Mucosa of descending colon (tissue), 3 donors: ENCODE measurements at regions of chr1 and their contacts with region 1.

Region 1: DNA sequence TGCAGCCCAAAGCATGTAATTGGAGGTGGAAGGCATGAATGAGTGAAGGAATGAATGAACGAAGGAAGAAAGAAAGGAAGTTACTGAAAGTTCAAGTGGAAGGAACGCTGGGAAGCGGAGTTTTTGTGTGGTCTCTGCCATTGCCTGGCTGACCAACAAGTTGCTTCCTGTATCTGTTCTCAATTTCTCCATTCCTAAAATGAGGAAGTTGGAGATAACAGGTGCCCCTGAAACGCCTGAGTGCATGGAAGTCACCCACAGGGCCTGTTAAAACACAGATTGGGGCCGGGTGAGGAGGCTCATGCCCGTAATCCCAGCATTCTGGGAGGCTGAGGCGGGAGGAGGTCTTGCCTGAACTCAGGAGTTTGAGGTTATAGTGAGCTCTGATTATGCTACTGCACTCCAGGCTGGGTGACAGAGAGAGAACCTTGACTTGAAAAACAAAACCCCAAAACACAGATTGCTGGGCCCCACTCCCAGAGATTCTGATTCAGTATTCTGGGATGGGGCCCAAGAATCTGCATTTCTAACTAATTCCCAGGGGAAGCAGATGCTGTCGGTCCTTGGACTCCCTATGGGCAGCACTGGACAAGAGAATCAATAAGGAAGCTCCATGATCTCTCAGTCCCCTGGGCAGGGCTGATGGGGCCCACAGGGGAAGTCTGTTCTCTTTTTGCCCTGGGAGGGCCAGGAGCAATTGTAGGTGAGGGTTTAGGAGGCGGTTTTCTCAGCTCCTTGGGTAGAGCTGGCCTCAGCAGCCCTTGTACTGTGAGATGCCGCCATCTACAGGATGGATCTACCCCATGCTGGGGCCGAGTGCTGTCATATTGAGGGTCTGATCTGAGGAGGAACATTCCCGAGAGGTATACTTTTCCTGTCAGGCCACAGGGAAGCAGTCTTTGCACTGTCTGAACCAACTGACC is 3.3 kb upstream of the CNR2 start:
- DNase-seq: peak; percentile 75 to 85 (median 81)
- ATAC-seq: peak; percentile 85
- H3K4me3 ChIP-seq: no peak overlapping the region
- H3K4me1 ChIP-seq: peaks cover 22% of the 10 kb centered on the region
- CTCF ChIP-seq: peak; percentile 34

Region 2: DNA sequence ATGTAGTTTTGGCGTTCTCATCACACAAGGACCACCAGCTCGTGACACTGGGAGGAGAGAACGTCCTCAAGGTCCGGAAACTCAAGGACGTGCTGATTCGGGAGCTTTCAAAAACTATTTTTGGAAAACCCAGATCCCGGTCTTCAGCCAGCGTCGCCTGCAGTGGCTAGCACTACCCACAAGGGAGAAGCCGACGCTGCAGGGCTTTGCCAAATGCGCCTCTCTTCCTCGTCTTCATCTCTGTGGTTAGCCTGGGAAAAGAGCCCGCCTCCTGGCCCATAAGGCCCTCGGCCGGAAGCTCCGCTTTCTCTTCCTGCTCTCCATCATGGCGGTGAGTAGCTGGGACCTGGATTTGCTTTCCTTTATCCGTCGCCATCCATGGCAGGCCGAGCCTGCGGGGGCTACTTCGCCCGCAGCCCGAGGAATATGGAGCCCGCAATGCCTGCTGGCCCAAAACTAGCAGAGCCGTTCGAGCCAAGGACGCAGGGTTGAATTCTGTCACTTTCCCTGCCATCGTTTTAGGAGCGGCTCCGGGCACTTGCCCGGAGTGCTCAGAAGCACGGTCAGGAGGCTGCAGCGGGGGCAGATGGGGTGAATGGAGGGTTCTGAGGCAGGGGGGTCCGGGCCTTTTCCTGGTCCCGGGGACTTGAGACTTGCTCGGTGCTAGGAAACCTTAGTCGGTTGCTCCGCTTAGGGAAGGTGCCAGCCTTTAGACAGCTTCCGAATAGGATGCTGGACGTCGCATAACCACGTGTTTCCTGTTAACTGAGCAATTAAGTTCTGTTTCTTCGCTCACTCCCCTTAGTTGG is 224.8 kb before region 1 on chr1 and contains the start of gene RPL11:
- intact Hi-C with region 1: no loop called
- DNase-seq: peak; percentile 89 to 93 (median 92)
- ATAC-seq: peak; percentile 100
- H3K4me3 ChIP-seq: peak within 1 kb of the TSS; percentile 79
- H3K4me1 ChIP-seq: peaks cover 41% of the 10 kb centered on the region
- CTCF ChIP-seq: peak; percentile 84
- total RNA-seq, gene RPL11: 729 to 882 (median 820) TPM

Region 3: GRCh38 chr1:23772049-23772853 is 144.2 kb before region 1 on chr1:
- intact Hi-C with region 1: loop called (anchors 5 to 10 kb)
- DNase-seq: peak; percentile 86 to 96 (median 92)
- ATAC-seq: peak; percentile 98
- H3K4me3 ChIP-seq: no peak overlapping the region
- H3K4me1 ChIP-seq: peaks cover 6% of the 10 kb centered on the region
- CTCF ChIP-seq: peak; percentile 90

Region 4: DNA sequence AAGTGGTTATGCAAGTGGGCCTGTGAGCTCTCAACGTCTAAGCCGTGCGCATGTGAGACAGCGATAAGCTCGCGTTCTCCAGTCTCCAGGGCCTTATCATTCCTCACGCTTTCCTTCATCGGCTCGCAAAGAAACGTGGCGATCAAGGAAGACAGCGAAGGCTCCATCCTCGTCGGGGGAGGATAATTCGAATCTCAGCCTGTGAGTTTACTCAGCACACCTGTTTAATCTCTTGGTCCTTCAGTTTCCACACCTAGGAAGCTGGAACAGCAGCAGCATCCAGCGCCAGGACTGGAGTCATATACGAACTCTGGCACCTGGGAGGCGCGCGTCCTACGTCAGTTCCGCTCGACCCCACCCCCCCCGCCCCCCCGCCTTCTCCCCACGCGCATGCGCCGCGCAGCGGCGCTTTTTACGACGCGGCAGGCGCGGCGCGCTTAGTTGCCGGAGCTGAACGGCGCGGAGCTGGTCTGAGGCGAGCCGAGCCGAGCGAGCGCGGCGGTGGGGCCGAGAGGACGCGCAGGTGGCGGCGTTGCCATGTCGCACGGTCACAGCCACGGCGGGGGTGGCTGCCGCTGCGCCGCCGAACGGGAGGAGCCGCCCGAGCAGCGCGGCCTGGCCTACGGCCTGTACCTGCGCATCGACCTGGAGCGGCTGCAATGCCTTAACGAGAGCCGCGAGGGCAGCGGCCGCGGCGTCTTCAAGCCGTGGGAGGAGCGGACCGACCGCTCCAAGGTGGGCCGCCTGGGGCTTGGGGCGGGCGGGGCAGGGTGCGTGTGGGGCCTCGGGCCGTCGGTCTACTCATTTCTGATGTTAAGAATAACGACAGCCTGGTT is 138.3 kb before region 1 on chr1 and contains the start of gene PITHD1:
- intact Hi-C with region 1: loop called (anchors 5 to 10 kb)
- DNase-seq: peak; percentile 87 to 89 (median 88)
- ATAC-seq: peak; percentile 94
- H3K4me3 ChIP-seq: peak within 1 kb of the TSS; percentile 73
- H3K4me1 ChIP-seq: peaks cover 27% of the 10 kb centered on the region
- CTCF ChIP-seq: no peak
- total RNA-seq, gene PITHD1: 38.9 to 53.2 (median 39.6) TPM